ENCODE measurements at regions of chr19 and their contacts with region 1.

Region 1: DNA sequence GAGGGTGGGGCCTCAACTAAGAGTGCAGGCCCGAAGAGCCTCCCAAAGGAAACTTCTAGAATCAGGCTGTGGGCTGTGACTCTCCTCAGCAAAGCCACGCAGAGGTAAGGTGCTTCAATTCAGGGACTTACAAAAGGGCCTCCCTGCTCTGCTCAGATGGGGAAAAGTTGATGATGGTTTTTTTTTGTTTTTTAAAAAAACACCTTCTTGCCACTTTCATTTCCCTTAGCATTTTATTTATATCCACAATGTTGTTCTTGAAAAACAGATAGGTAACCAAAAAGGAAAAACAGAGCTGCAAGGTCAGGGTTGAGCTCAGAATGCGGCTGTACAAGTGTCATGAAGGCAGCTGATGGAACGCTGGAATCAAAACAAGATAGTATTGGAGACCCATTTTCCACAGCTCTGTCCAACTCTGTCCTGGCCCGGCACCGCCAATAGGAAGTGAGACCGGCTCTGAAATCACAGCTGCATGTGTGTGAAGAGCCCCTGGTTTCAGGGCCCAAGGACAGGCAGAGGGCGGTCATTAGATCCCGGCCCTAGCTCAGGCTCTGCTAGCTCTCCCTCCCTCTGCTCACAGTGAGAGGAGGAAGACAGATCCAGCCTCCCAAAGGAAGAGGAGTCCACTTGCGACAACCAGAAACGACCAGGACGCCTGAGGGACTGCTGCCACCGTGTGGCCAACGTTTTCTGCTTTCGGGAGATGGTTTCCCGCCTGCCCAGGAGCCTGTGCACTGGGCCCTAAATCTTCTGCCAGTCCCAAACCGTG is 58.3 kb downstream of the KLF2 start:
- DNase-seq: peak; percentile 80
- H3K4me3 ChIP-seq: no peak overlapping the region
- H3K27ac ChIP-seq: peak overlapping the region; percentile 51 to 55
- H3K4me1 ChIP-seq: no peaks in the 10 kb centered on the region
- H3K27me3 ChIP-seq: no peaks in the 10 kb centered on the region
- CTCF ChIP-seq: peak; percentile 53 to 92 (median 86)
- POLR2A ChIP-seq: no peak

Region 2: DNA sequence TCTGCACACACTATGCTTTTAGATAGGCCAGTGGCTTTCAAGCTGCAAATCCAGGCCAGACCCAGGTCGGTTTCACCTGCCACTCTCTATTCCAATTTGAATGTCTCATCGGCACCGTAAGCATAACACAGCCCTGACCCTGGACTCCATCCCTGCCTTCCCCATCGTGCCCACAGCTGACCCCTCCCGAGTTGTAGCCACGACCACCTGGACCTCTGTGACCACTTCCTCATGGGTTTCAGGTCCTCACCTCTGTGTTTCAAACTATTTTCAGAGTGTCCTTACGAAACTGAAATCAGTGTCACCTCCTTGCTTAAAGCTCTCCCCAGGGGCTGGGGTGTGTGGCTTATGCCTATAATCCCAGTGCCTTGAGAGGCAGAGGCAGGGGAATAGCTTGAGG is 248.4 kb before region 1 on chr19:
- intact Hi-C with region 1: no loop called
- DNase-seq: no peak
- H3K4me3 ChIP-seq: no peak overlapping the region
- H3K27ac ChIP-seq: no peak overlapping the region
- H3K4me1 ChIP-seq: no peaks in the 10 kb centered on the region
- H3K27me3 ChIP-seq: no peaks in the 10 kb centered on the region
- CTCF ChIP-seq: no peak
- POLR2A ChIP-seq: no peak

Region 3: GRCh38 chr19:16247353-16248182 is 135.4 kb before region 1 on chr19:
- intact Hi-C with region 1: loop called (anchors 1 kb)
- DNase-seq: peak; percentile 66
- H3K4me3 ChIP-seq: no peak overlapping the region
- H3K27ac ChIP-seq: no peak overlapping the region
- H3K4me1 ChIP-seq: no peaks in the 10 kb centered on the region
- H3K27me3 ChIP-seq: no peaks in the 10 kb centered on the region
- CTCF ChIP-seq: peak; percentile 92 to 96 (median 94)
- POLR2A ChIP-seq: no peak

Measured in prostate gland (tissue), 2 donors.